ENCODE measurements at regions of chr7 and their contacts with region 1.

Region 1: DNA sequence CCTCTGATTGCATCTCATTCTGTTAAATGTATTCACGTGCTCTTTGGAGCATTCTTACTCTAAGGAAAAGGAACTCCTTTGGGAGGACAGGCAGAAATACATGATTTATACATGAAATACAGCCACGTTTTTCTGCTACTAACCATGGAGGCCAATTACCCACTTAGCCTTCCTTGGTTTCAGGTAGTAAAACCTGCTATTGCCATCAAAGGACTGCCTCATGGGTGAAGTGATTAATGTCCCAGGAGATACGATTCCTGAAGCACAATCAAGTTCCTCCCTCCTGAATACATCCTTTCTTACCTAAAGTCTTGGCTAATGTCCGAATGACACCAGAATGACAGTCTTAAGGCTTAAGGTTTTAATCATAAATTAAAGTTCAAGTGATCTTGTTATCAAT is 58.5 kb upstream of the PIK3CG start:
- DNase-seq: no peak
- ATAC-seq: no peak
- H3K4me3 ChIP-seq: no peak overlapping the region
- H3K27ac ChIP-seq: no peak overlapping the region
- H3K4me1 ChIP-seq: peaks cover 0 to under 1% (median 0%) of the 10 kb centered on the region in 12 donors
- H3K27me3 ChIP-seq: no peaks in the 10 kb centered on the region
- CTCF ChIP-seq: no peak
- POLR2A ChIP-seq: no peak

Region 2: GRCh38 chr7:106534271-106534846 is 272.2 kb before region 1 on chr7:
- intact Hi-C with region 1: no loop called
- DNase-seq: no peak
- ATAC-seq: no peak
- H3K4me3 ChIP-seq: no peak overlapping the region
- H3K27ac ChIP-seq: no peak overlapping the region
- H3K4me1 ChIP-seq: no peaks in the 10 kb centered on the region
- H3K27me3 ChIP-seq: no peaks in the 10 kb centered on the region
- CTCF ChIP-seq: no peak
- POLR2A ChIP-seq: no peak

Region 3: DNA sequence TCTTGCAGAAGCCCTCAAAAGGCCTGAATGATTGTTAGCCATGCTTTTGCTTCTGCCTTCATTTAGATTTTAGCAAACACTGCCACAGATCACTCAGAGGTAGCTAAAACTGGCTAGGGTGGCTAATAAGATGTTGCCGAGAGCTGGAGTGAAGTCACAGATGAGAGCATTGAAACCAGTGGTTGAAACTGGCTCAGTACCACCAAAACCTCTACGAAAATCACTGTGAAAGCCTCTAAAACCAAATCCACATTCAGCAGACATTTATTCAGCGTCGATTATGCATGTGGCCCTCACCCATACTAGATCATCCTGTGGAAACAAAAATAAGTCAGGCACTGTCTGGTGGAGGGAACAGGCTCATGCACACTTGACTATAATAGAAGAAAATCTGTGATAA is 109.3 kb after region 1 on chr7:
- intact Hi-C with region 1: loop called in 1 of 10 experiments (anchors 10 kb)
- DNase-seq: no peak
- ATAC-seq: no peak
- H3K4me3 ChIP-seq: no peak overlapping the region
- H3K27ac ChIP-seq: no peak overlapping the region
- H3K4me1 ChIP-seq: peaks cover 0 to 3% (median 0%) of the 10 kb centered on the region in 12 donors
- H3K27me3 ChIP-seq: no peaks in the 10 kb centered on the region
- CTCF ChIP-seq: no peak
- POLR2A ChIP-seq: no peak

Measured in heart left ventricle (tissue), 16 donors.